Psoas muscle (tissue), 8 donors: ENCODE measurements at regions of chr3 and their contacts with region 1.

Region 1: GRCh38 chr3:158821837-158822236 is 20.0 kb downstream of the MFSD1 start:
- DNase-seq: no peak
- ATAC-seq: no peak
- H3K4me3 ChIP-seq: no peak overlapping the region
- H3K27ac ChIP-seq: no peak overlapping the region
- H3K4me1 ChIP-seq: no peaks in the 10 kb centered on the region
- H3K27me3 ChIP-seq: no peaks in the 10 kb centered on the region
- CTCF ChIP-seq: no peak

Region 2: GRCh38 chr3:159787191-159787590 is 965.4 kb after region 1 on chr3:
- intact Hi-C with region 1: loop called in 1 of 2 experiments (anchors 10 kb)
- DNase-seq: no peak
- ATAC-seq: no peak
- H3K4me3 ChIP-seq: no peak overlapping the region
- H3K27ac ChIP-seq: no peak overlapping the region
- H3K4me1 ChIP-seq: no peaks in the 10 kb centered on the region
- H3K27me3 ChIP-seq: no peaks in the 10 kb centered on the region
- CTCF ChIP-seq: no peak